ENCODE measurements at regions of chr12 and their contacts with region 1.

Region 1: DNA sequence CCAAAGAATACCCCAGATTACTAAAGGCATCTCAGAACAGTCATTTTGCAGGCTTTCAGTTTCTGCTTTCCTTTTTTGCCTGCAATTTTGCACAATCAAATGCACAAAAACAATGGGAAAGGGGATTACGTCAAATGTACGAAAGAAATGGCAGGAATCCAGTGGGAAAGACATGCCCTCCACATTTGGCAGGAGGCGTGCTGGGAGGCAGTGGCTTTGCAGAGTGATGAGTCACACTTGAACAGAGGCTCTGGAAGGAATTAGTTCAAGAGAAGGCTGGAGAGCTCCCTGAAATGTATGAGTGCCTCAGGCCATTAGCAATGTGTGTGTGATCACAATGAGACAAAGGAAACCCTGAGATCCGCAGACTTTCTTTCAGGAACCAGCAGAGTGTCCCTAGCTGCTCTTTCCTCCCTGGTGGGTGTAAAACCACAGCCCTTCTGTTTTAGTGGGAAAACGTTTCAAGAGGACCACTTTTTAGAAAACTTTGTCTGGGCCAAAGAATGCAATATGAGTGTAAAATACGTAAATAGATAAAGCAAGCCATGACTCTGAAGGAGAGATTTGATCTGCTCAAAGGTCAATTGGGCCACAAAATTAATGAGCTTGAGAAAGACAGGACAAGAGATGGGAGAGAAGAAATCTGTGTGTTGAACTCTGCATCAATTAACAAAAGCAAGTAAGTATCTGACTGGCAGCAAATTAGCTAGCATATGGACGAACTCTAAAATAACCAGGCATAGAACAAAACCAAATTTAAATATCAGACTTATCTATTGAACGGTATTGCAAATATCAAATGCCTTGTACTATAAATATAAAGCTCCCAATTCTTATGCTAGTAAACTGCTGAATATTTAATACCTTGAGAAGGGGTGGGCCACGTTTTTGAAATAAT is 155.4 kb upstream of the PDE3A start:
- DNase-seq: peak; percentile 89

Region 2: DNA sequence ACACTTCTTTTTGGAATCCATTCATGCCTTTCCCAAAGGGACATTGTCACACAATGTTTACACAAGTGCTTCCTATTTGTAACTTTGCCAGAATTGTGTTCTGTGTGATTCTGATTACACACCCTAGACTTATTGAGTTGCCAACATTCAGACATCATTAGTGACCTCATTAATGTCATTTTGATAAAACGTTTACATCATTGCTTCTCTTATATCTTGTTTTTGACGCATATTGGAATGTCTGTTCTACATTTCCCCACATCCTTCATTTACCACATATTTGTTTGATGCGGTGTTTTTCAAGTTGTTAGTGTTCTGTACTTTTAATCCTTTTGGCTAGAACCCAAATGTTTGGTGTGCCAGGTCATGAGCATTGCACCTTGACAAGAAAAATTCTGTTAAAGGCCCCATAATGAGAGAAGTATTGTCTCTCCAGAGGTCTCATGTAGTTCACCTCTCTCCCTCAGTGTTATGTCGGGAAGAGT is 468.1 kb before region 1 on chr12:
- intact Hi-C with region 1: loop called (anchors 5 kb)
- DNase-seq: no peak

Region 3: GRCh38 chr12:19994970-19995369 is 217.9 kb before region 1 on chr12:
- intact Hi-C with region 1: loop called (anchors 10 kb)
- DNase-seq: no peak

Region 4: GRCh38 chr12:20024194-20024593 is 188.7 kb before region 1 on chr12:
- intact Hi-C with region 1: no loop called
- DNase-seq: no peak